ENCODE measurements at regions of chr7 and their contacts with region 1.

Region 1: GRCh38 chr7:121563177-121563576 is 167.1 kb upstream of the FAM3C start:
- DNase-seq: no peak
- H3K4me3 ChIP-seq: no peak overlapping the region
- H3K27ac ChIP-seq: no peak overlapping the region
- H3K4me1 ChIP-seq: no peaks in the 10 kb centered on the region
- H3K27me3 ChIP-seq: no peaks in the 10 kb centered on the region
- CTCF ChIP-seq: peak; percentile 32 to 55 (median 44)

Region 2: DNA sequence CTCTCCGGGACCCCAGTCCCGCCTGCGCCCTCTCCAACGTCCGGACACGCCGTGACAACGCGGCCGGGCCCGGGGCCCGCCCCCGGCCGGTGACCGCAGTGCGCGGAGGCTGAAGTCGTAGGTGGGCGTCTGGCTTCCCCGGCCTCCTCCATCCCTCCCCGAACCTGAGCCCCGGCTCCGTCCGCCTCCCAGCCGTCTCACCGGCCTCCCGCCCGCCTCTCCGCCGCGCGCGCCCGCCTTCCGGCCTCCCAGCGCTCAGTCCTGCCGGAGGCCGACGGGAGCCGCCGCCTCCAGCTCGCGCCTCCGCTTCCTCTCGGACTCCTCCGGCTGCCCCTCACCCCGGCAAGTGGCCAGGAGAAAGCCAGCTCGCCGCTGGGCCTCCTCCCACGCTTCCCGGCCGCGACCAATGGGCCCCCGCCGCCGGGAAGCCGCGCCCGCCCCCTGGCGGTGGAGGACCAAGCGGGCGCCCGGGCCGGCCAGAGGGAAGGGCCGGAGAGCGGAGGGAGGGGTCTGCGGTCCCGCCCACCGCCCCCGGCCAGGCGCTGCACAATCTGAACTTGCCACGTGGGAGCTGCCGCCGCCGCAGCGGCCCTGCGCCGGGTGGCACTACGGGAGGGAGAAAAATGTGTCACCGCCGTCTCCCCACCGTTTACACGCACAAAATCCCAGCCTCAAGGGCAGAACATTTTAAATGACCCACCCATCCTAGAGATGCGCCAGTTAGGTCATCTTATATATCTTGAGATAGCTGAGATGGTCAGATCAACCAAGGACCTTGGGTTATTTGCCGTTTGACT is 167.0 kb before region 1 on chr7 and contains the start of gene FAM3C:
- dilution Hi-C with region 1: loop called (anchors 25 kb)
- DNase-seq: peak; percentile 21
- H3K4me3 ChIP-seq: peak within 1 kb of the TSS; percentile 83 to 95 (median 93)
- H3K27ac ChIP-seq: peak within 1 kb of the TSS; percentile 78
- H3K4me1 ChIP-seq: peaks cover 7% of the 10 kb centered on the region
- H3K27me3 ChIP-seq: no peaks in the 10 kb centered on the region
- CTCF ChIP-seq: peak; percentile 54 to 72 (median 65)
- polyA plus RNA-seq, gene FAM3C: 47.3 to 93.5 TPM (median 64.9 TPM) in 3 replicates